K562 (cell line): ENCODE measurements at regions of chr10 and their contacts with region 1.

Region 1: DNA sequence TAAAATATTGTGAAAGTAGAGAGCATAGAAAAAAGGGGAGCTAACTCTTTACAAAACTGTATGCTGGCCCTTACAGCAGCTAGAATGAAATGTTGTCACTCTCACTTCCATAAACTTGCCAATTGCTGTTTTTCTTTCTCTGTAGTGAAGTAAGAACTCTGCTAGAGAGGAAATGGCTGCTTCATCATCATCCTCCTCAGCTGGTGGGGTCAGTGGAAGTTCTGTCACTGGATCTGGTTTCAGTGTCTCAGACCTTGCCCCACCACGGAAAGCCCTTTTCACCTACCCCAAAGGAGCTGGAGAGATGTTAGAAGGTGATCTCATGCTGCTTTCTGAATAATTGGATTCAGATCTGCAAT is 7.6 kb upstream of the ASCC1 start:
- DNase-seq: no peak
- ATAC-seq: no peak
- H3K4me3 ChIP-seq: no peak overlapping the region
- H3K27ac ChIP-seq: no peak overlapping the region
- H3K4me1 ChIP-seq: peaks cover 4 to 15% of the 10 kb centered on the region in 2 experiments; a peak in 3 of 5 replicates
- H3K27me3 ChIP-seq: no peaks in the 10 kb centered on the region
- CTCF ChIP-seq: no peak
- EP300 ChIP-seq: no peak
- POLR2A ChIP-seq: no peak
- RAD21 ChIP-seq: no peak

Region 2: DNA sequence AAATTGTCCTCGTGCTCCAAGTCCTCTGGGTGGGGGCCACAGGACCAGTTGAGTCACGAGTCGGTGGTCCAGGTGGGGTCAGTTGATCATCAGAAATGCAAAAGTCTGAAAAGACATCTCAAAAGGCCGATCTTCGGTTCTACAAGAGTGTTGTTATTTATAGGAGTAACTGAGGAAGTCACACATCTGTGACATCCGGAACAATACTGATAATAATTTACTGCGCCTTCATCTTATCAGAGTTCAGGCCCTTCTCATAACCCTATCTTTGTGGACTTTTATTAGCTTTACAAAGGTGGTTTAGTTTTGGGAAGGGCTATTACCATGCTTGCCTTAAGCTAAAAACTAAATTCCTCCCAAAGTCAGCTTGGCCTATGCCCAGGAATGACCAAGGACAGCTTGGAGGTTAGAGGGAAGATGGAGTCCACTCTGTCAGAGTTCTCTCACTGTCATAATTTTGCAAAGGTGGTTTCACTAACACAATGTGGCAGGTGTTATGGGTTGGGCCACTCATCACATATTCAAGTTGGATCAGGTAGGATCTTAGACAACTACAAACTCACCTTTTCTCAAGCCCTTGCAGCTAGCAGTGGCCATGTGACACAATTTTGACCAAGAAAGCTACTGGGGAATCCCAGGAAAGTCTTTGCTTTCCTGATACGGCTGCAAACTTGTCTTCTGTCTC is 314.2 kb before region 1 on chr10:
- CTCF ChIA-PET with region 1: no interaction called
- POLR2A ChIA-PET with region 1: no interaction called
- in situ Hi-C with region 1: loop called (anchors 10 kb)
- intact Hi-C with region 1: no loop called
- DNase-seq: no peak
- ATAC-seq: no peak
- H3K4me3 ChIP-seq: no peak overlapping the region
- H3K27ac ChIP-seq: no peak overlapping the region
- H3K4me1 ChIP-seq: peaks cover 3 to 12% of the 10 kb centered on the region in 2 experiments; a peak in 3 of 5 replicates
- H3K27me3 ChIP-seq: peaks cover 9% of the 10 kb centered on the region in 2 experiments; a peak in 4 of 5 replicates
- CTCF ChIP-seq: no peak
- EP300 ChIP-seq: no peak
- POLR2A ChIP-seq: no peak
- RAD21 ChIP-seq: no peak

Region 3: GRCh38 chr10:72126184-72126871 is 97.4 kb before region 1 on chr10:
- CTCF ChIA-PET with region 1: interaction called, 12 read pairs
- POLR2A ChIA-PET with region 1: no interaction called
- in situ Hi-C with region 1: no loop called
- intact Hi-C with region 1: loop called (anchors 2 kb)
- DNase-seq: peak; percentile 27 to 59 (median 46)
- ATAC-seq: peak; percentile 79
- H3K4me3 ChIP-seq: no peak overlapping the region
- H3K27ac ChIP-seq: no peak overlapping the region
- H3K4me1 ChIP-seq: peaks cover 0 to 5% of the 10 kb centered on the region in 2 experiments; a peak in 1 of 5 replicates
- H3K27me3 ChIP-seq: no peaks in the 10 kb centered on the region
- CTCF ChIP-seq: peak; percentile 47 to 82 (median 58); a peak in 5 of 6 replicates
- EP300 ChIP-seq: no peak
- POLR2A ChIP-seq: no peak
- RAD21 ChIP-seq: peak; percentile 77 to 89

Region 4: GRCh38 chr10:72238392-72239175 is 14.9 kb after region 1 on chr10:
- CTCF ChIA-PET with region 1: interaction called, 4 read pairs
- POLR2A ChIA-PET with region 1: interaction called, 15 read pairs
- in situ Hi-C with region 1: no loop called
- intact Hi-C with region 1: no loop called
- DNase-seq: no peak
- ATAC-seq: no peak
- H3K4me3 ChIP-seq: no peak overlapping the region
- H3K27ac ChIP-seq: no peak overlapping the region; the same call in 2 of the 3 replicates
- H3K4me1 ChIP-seq: peaks cover 0 to 4% of the 10 kb centered on the region in 2 experiments; a peak in 4 of 5 replicates
- H3K27me3 ChIP-seq: no peaks in the 10 kb centered on the region
- CTCF ChIP-seq: no peak
- EP300 ChIP-seq: no peak
- POLR2A ChIP-seq: no peak
- RAD21 ChIP-seq: no peak